Transverse colon (tissue), 4 donors: ENCODE measurements at regions of chr11 and their contacts with region 1.

Region 1: DNA sequence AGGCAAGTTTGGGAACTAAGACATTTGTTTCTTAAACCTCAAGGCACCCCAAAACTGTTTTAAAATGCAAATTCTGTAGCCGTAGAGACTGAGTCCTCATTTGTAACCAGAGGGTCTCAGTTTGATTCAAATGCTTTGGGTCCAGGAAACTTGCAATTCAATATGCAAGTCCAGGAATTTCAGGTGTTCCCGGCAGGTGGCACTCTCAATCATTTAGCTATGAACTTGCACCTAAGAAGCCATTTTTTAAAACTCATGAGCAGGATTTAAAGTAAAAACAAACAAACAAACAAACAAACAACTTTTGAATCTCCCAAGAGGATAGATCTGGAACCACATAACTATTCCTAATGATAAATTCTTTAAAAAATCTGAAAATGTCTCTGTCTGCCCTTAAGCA is 8.7 kb upstream of the ABTB2 start:
- DNase-seq: peak; percentile 35
- H3K4me3 ChIP-seq: no peak overlapping the region
- H3K27ac ChIP-seq: no peak overlapping the region
- H3K4me1 ChIP-seq: no peaks in the 10 kb centered on the region
- H3K27me3 ChIP-seq: no peaks in the 10 kb centered on the region
- CTCF ChIP-seq: peak; percentile 12 to 40 (median 31)
- EP300 ChIP-seq: no peak
- POLR2A ChIP-seq: no peak

Region 2: GRCh38 chr11:34174412-34175041 is 192.0 kb before region 1 on chr11:
- in situ Hi-C with region 1: loop called (anchors 5 to 10 kb)
- intact Hi-C with region 1: loop called (anchors 2 kb)
- DNase-seq: peak; percentile 86
- H3K4me3 ChIP-seq: peak overlapping the region in 2 of 4 donors; percentile 21 to 40
- H3K27ac ChIP-seq: no peak overlapping the region
- H3K4me1 ChIP-seq: peaks cover 0 to 12% (median 6%) of the 10 kb centered on the region in 4 donors
- H3K27me3 ChIP-seq: no peaks in the 10 kb centered on the region
- CTCF ChIP-seq: peak; percentile 94 to 97 (median 96)
- EP300 ChIP-seq: no peak
- POLR2A ChIP-seq: no peak

Region 3: DNA sequence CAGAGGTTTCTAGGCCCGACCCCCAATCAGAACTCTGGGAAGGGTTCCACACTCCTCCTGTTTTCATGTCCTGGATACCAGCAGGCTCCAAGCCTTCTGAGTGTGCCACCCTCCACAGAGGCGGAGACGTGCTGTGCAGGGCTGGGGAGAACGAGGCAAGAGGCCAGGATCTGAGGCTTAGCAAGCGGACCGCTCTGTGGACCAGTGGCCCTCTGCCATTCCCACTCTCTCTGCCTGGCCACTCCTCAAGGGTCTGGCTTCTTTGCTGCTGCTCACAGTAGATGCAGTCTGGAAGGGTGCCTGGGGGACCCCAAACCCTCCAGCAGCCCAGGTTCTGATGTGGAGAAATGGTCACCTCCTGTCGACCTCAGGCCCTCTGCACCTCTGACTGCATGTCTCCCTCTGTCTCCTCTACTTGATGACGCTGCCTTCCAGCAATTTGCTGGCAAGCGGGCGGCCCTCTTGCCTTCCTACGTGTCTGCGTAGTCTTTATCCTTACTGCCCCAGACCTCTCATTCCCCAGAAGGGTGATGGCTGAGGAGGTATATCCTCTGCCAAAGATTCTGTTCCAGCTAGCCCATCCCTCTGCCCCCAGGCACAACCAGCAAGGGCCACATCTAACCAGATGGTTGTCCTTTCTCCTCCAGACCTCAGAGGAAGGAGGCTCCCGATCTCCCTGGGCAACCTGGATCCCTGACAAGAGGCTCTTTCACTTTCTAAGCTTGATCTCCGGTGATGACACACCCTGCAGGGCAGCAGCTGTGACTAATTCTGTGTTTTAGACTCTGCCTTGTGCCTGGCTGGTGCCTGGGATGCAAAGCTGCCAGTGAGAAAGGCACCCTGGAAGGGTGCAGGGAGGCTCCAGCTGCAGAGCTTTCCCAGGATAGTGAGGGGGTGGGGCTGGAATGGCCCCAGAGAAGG is 173.8 kb before region 1 on chr11:
- in situ Hi-C with region 1: no loop called
- intact Hi-C with region 1: no loop called
- DNase-seq: peak; percentile 28
- H3K4me3 ChIP-seq: no peak overlapping the region
- H3K27ac ChIP-seq: peak overlapping the region; percentile 35 to 69 (median 62)
- H3K4me1 ChIP-seq: peaks cover 0 to 13% (median 2%) of the 10 kb centered on the region in 4 donors
- H3K27me3 ChIP-seq: no peaks in the 10 kb centered on the region
- CTCF ChIP-seq: no peak
- EP300 ChIP-seq: no peak
- POLR2A ChIP-seq: no peak

Region 4: DNA sequence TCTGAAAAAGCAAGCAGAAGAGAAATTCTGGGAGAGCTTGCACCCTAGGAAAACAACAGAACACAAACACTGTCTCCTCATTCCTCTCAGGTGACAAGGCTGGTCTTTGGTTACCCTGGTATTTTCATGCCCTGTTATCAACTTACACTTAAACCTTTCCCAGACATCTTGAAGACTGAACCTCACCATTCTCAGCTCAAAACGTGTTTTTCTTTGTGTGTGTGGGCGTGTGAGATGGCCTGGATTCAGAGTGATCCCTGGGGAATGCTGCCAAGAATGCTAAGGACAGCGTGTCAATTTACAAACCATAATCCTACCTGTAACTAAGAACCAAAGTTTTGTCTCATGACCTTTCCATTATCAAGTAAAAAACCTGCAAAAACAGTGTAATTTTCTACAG is 113.8 kb after region 1 on chr11:
- in situ Hi-C with region 1: loop called in 1 of 4 experiments (anchors 10 kb)
- intact Hi-C with region 1: no loop called
- DNase-seq: no peak
- H3K4me3 ChIP-seq: no peak overlapping the region
- H3K27ac ChIP-seq: no peak overlapping the region
- H3K4me1 ChIP-seq: no peaks in the 10 kb centered on the region
- H3K27me3 ChIP-seq: no peaks in the 10 kb centered on the region
- CTCF ChIP-seq: no peak
- EP300 ChIP-seq: no peak
- POLR2A ChIP-seq: no peak